Transverse colon (tissue), 4 donors: ENCODE measurements at regions of chr15 and their contacts with region 1.

Region 1: GRCh38 chr15:29925227-29926082 is 103.2 kb upstream of the TJP1 start:
- DNase-seq: peak; percentile 63
- H3K4me3 ChIP-seq: no peak overlapping the region
- H3K27ac ChIP-seq: peak overlapping the region; percentile 65 to 76 (median 72)
- H3K4me1 ChIP-seq: peaks cover 6 to 21% (median 16%) of the 10 kb centered on the region in 4 donors
- H3K27me3 ChIP-seq: no peaks in the 10 kb centered on the region
- CTCF ChIP-seq: peak; percentile 44 to 68 (median 47)
- EP300 ChIP-seq: no peak
- POLR2A ChIP-seq: no peak

Region 2: GRCh38 chr15:29668120-29668602 is 257.3 kb before region 1 on chr15:
- in situ Hi-C with region 1: loop called in 1 of 4 experiments (anchors 25 kb)
- intact Hi-C with region 1: no loop called
- DNase-seq: peak; percentile 83
- H3K4me3 ChIP-seq: no peak overlapping the region
- H3K27ac ChIP-seq: no peak overlapping the region
- H3K4me1 ChIP-seq: peaks cover 0 to 24% (median 12%) of the 10 kb centered on the region in 4 donors
- H3K27me3 ChIP-seq: no peaks in the 10 kb centered on the region
- CTCF ChIP-seq: peak; percentile 65 to 96 (median 86)
- EP300 ChIP-seq: no peak
- POLR2A ChIP-seq: no peak

Region 3: GRCh38 chr15:29747837-29748417 is 177.5 kb before region 1 on chr15:
- in situ Hi-C with region 1: loop called in 1 of 4 experiments (anchors 10 kb)
- intact Hi-C with region 1: no loop called
- DNase-seq: no peak
- H3K4me3 ChIP-seq: no peak overlapping the region
- H3K27ac ChIP-seq: no peak overlapping the region
- H3K4me1 ChIP-seq: peaks cover 0 to 5% (median 0%) of the 10 kb centered on the region in 4 donors
- H3K27me3 ChIP-seq: no peaks in the 10 kb centered on the region
- CTCF ChIP-seq: peak in 3 of 5 experiments; percentile 25 to 35 (median 30)
- EP300 ChIP-seq: no peak
- POLR2A ChIP-seq: no peak